Heart left ventricle (tissue), 16 donors: ENCODE measurements at regions of chr7 and their contacts with region 1.

Region 1: GRCh38 chr7:4006687-4007086 is 675.4 kb upstream of the FOXK1 start:
- DNase-seq: no peak
- ATAC-seq: no peak
- H3K4me3 ChIP-seq: no peak overlapping the region
- H3K27ac ChIP-seq: no peak overlapping the region
- H3K4me1 ChIP-seq: no peaks in the 10 kb centered on the region
- H3K27me3 ChIP-seq: peaks cover 0 to 4% (median 0%) of the 10 kb centered on the region in 9 donors
- CTCF ChIP-seq: no peak
- POLR2A ChIP-seq: no peak

Region 2: GRCh38 chr7:3942816-3943745 is 63.6 kb before region 1 on chr7:
- intact Hi-C with region 1: loop called in 1 of 10 experiments (anchors 10 kb)
- DNase-seq: no peak
- ATAC-seq: no peak
- H3K4me3 ChIP-seq: no peak overlapping the region
- H3K27ac ChIP-seq: no peak overlapping the region
- H3K4me1 ChIP-seq: no peaks in the 10 kb centered on the region
- H3K27me3 ChIP-seq: no peaks in the 10 kb centered on the region
- CTCF ChIP-seq: no peak
- POLR2A ChIP-seq: no peak

Region 3: DNA sequence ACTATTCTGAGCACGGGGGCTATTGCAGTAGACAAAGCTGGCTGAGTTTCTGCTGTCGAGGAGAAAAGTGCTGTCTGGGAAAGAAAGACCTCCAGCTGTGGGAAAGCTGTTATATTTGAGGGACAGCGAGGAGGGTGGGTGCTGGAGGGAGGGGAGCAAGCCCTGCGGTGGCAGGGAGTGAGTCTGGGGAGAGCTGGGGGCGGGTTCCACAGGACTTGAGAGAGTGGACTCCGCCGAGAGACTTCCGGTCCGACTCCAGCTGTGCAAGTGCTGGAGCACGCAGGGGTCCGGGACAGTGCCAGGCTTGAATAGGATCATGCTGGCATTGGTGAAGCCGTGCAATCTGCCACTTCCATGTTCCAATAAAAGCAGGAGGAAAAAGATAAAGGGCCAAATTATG is 73.3 kb after region 1 on chr7:
- intact Hi-C with region 1: no loop called
- DNase-seq: no peak
- ATAC-seq: no peak
- H3K4me3 ChIP-seq: no peak overlapping the region
- H3K27ac ChIP-seq: no peak overlapping the region
- H3K4me1 ChIP-seq: no peaks in the 10 kb centered on the region
- H3K27me3 ChIP-seq: no peaks in the 10 kb centered on the region
- CTCF ChIP-seq: no peak
- POLR2A ChIP-seq: no peak